T-cell (primary cell): ENCODE measurements at regions of chr11 and their contacts with region 1.

Region 1: DNA sequence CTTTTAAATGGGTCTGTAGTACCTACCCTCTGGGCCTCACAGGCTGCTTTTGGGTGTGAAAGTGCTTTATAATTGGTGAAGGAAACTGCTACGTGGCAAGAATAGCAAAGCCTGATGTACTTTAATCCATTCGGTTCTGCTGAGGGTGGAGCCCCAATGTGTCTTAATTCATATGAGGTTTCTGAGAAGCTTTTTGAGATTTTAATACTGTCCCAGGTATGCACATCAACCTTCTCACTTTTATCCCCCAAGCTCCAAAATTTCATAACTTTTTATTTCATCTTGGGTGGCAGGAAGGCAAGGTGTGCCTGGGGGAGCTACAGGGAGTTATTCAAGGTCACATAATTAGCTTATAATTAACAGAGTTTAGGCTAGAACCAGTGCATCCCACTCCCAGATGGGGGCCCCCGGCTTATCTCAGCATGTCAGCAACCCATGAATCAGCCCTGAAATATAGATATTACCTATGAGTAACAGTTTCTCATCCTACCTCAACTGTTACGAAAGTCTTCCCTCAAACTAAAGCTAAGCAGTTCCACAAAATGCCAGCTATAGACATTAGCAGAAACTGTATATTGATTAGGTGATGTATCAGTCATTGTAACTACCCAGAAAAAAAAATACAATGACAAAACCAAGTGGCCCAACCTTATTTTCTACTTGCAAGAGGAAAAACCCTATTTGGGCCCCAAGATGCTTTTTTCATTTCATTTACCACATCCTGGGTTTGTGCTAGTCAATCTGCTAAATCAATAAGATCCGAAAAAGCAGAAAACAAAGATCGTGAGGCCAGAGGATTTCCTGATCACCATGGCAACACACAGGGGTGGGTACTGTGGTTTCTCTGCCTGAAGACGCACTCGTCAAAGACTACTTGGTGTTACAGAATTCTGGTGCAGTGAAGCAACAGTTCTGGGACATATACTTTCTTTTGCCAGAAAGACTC is 26.7 kb downstream of the CD44 start:
- DNase-seq: peak; percentile 50 to 97 (median 90)
- ATAC-seq: peak; percentile 79 to 85 (median 84)
- H3K4me3 ChIP-seq: peak overlapping the region; percentile 35 to 46
- H3K4me3 Mint-ChIP-seq: peak overlapping the region; percentile 69 to 79 (median 78)
- H3K27ac ChIP-seq: peak overlapping the region; percentile 99
- H3K27ac Mint-ChIP-seq: peak overlapping the region; percentile 100
- H3K4me1 ChIP-seq: peaks cover 90 to 92% of the 10 kb centered on the region in 2 experiments
- H3K4me1 Mint-ChIP-seq: peaks cover 100% of the 10 kb centered on the region in 3 donors
- H3K27me3 ChIP-seq: no peaks in the 10 kb centered on the region
- H3K27me3 Mint-ChIP-seq: no peaks in the 10 kb centered on the region

Region 2: DNA sequence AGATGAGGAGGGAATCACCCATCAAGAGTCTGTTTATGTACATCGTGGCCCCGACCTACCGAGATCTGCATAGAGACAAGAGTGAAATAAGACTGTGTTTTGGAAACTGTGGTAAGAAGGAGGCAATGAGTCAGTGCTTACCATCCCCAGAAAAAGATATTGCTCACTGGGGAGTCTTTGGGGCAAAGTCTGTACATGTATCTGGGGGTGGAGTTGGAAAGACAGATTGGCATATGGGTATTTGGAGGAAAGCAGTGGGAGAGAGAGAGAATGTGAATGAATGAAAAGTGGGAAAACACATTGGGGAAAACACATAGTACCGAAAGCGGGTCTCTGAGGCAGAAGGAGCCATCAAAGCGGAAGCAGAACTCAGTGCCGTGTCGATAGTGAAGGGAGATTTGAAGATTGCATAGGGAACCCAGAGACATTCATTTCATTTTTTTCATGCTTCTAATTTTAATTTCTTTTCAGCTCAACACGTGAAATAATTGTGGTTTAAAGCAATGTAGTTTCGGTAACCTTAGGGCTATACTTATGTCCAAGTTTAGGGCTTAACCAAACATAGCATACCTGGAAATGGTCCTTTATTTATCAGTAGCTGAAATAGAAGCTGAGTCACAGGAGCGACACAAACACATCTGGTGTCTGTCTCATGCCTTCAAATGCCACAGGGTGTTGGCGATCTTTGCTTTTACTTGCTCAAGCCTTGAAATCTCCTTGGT is 125.3 kb before region 1 on chr11:
- CTCF ChIA-PET with region 1: interaction called in 1 of 2 experiments, 6 read pairs
- POLR2A ChIA-PET with region 1: interaction called, 5 to 72 read pairs
- DNase-seq: peak in 33 of 35 experiments; percentile 36 to 85 (median 50)
- ATAC-seq: peak; percentile 86 to 89 (median 88)
- H3K4me3 ChIP-seq: peak overlapping the region; percentile 51 to 53
- H3K4me3 Mint-ChIP-seq: peak overlapping the region; percentile 78 to 86 (median 80)
- H3K27ac ChIP-seq: peak overlapping the region; percentile 97
- H3K27ac Mint-ChIP-seq: peak overlapping the region; percentile 95 to 99
- H3K4me1 ChIP-seq: peaks cover 27 to 58% of the 10 kb centered on the region in 2 experiments
- H3K4me1 Mint-ChIP-seq: peaks cover 54 to 82% (median 69%) of the 10 kb centered on the region in 3 donors
- H3K27me3 ChIP-seq: no peaks in the 10 kb centered on the region
- H3K27me3 Mint-ChIP-seq: no peaks in the 10 kb centered on the region

Region 3: DNA sequence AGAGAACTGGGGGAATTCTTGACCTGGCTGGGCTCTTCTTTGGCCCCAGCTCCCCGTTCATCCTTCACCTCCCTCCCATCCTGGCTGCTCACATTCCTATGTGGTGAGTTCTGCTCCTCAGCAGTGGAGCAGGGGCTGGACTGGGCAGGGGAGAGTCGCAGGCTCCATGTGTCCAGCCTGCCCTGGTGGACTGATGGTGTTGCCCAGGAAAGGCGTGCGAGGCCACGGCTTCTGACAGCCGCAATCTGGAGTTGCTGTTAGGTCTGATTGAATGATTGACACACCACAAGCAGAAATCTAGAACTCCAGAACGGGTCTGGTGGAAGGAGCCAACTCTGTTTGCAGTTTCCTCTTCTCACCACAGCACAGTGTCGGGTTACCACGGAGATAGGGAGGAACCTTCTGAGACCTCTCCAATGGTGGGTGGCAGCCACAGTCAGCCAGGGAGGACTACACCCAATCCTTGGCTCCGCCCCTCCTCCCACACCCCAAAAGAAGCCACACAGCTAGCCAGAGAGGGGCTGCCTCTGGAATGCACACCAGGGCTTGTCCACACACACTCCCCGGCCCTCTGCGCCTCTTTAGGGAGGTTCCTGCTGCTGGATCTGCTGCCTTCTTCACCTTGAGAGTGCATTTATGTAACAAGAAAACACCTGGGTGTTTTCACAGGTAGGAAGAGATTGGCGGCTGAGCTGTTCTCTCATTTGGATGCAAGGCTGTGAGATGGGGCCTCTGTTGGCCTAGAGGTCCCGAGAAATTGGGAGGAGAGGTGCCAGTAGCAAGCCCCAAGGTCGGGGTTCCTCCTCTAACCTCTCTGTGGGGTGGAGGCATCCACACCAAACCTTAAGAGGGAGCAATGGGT is 83.1 kb before region 1 on chr11:
- CTCF ChIA-PET with region 1: interaction called in 1 of 2 experiments, 4 read pairs
- POLR2A ChIA-PET with region 1: interaction called in 1 of 2 experiments, 12 read pairs
- DNase-seq: peak; percentile 63 to 93 (median 85)
- ATAC-seq: peak; percentile 83 to 86 (median 84)
- H3K4me3 ChIP-seq: peak overlapping the region; percentile 40 to 62
- H3K4me3 Mint-ChIP-seq: peak overlapping the region; percentile 65 to 81 (median 67)
- H3K27ac ChIP-seq: peak overlapping the region; percentile 95
- H3K27ac Mint-ChIP-seq: peak overlapping the region; percentile 97 to 98
- H3K4me1 ChIP-seq: peaks cover 58 to 77% of the 10 kb centered on the region in 2 experiments
- H3K4me1 Mint-ChIP-seq: peaks cover 92 to 98% (median 94%) of the 10 kb centered on the region in 3 donors
- H3K27me3 ChIP-seq: no peaks in the 10 kb centered on the region
- H3K27me3 Mint-ChIP-seq: no peaks in the 10 kb centered on the region

Region 4: DNA sequence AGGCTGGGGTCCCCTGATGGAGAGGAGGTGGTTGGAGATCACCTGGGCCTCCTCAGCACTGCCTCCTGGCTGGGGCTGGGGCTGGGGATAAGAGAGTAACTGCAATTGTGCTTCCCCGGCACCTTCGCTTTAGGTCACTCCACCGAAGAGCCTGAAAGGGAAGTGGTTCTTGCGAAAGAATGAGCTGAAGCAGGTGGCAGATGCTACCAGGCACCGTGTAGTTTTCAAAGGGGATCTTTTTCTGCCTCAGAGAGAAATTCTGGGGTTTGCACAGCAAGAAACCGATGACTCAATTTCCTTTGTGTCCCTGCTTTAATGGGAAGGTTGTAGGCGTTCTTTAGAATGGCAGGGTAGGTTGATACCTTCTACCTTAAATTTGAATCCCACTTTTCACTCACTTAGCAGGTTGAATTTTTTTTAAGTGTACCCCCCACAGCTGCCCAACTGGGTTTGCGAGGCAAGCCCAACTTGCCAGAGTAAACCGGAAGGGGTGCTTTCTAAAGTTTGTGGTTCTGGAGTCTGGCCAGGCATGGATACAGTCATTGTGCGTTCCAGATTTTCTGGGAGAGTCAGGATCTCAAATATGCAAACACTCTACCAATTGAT is 21.5 kb before region 1 on chr11:
- CTCF ChIA-PET with region 1: interaction called, 9 to 21 read pairs
- POLR2A ChIA-PET with region 1: interaction called, 7 to 165 read pairs
- DNase-seq: peak in 34 of 35 experiments; percentile 43 to 83 (median 65)
- ATAC-seq: peak; percentile 62 to 74 (median 64)
- H3K4me3 ChIP-seq: peak overlapping the region; percentile 61 to 85
- H3K4me3 Mint-ChIP-seq: peak overlapping the region; percentile 91 to 98 (median 98)
- H3K27ac ChIP-seq: peak overlapping the region; percentile 91
- H3K27ac Mint-ChIP-seq: peak overlapping the region; percentile 92 to 98
- H3K4me1 ChIP-seq: peaks cover 60 to 79% of the 10 kb centered on the region in 2 experiments
- H3K4me1 Mint-ChIP-seq: peaks cover 75 to 92% (median 79%) of the 10 kb centered on the region in 3 donors
- H3K27me3 ChIP-seq: no peaks in the 10 kb centered on the region
- H3K27me3 Mint-ChIP-seq: no peaks in the 10 kb centered on the region

Region 5: DNA sequence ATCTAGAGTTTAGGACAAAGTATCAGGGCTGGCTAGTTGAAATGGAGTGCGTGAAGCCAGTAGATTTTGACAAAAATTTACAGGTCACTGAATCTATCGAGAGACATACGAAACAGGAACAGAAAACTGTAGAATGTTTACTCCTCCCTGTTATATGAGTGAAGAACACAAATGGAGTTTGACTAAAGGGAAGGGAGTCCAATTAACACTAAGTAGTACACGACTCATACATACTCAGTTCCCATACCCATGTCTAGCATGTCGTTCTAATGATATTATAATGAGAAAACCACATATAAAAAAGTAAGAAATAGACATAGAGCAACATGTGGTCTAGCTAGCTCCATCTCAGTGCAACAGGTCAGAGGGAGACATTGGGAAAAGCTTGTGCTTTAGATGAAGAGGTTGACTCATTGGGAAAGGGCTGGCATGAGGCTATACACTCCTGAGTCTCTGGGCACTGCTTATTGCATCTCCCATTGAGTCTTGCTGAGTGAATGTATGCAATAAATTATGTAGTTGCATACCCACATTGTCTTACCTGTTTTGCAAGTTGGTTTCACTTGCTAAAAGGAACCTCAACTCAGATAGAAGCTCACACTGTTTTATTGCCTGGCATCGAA is 16.7 kb after region 1 on chr11:
- CTCF ChIA-PET with region 1: interaction called, 6 to 34 read pairs
- POLR2A ChIA-PET with region 1: interaction called, 9 to 81 read pairs
- DNase-seq: no peak
- ATAC-seq: peak in 1 of 4 experiments; percentile 5
- H3K4me3 ChIP-seq: no peak overlapping the region
- H3K4me3 Mint-ChIP-seq: peak overlapping the region; percentile 18 to 23 (median 21)
- H3K27ac ChIP-seq: peak overlapping the region; percentile 50
- H3K27ac Mint-ChIP-seq: peak overlapping the region; percentile 92 to 94
- H3K4me1 ChIP-seq: peaks cover 49 to 69% of the 10 kb centered on the region in 2 experiments
- H3K4me1 Mint-ChIP-seq: peaks cover 82 to 88% (median 86%) of the 10 kb centered on the region in 3 donors
- H3K27me3 ChIP-seq: no peaks in the 10 kb centered on the region
- H3K27me3 Mint-ChIP-seq: no peaks in the 10 kb centered on the region

Region 6: GRCh38 chr11:35227576-35228327 is 62.1 kb after region 1 on chr11:
- CTCF ChIA-PET with region 1: no interaction called
- POLR2A ChIA-PET with region 1: no interaction called
- DNase-seq: no peak
- ATAC-seq: no peak
- H3K4me3 ChIP-seq: no peak overlapping the region
- H3K4me3 Mint-ChIP-seq: no peak overlapping the region
- H3K27ac ChIP-seq: no peak overlapping the region
- H3K27ac Mint-ChIP-seq: peak overlapping the region; percentile 63 to 80
- H3K4me1 ChIP-seq: no peaks in the 10 kb centered on the region
- H3K4me1 Mint-ChIP-seq: peaks cover 8 to 32% (median 23%) of the 10 kb centered on the region in 3 donors
- H3K27me3 ChIP-seq: no peaks in the 10 kb centered on the region
- H3K27me3 Mint-ChIP-seq: no peaks in the 10 kb centered on the region

Region 7: DNA sequence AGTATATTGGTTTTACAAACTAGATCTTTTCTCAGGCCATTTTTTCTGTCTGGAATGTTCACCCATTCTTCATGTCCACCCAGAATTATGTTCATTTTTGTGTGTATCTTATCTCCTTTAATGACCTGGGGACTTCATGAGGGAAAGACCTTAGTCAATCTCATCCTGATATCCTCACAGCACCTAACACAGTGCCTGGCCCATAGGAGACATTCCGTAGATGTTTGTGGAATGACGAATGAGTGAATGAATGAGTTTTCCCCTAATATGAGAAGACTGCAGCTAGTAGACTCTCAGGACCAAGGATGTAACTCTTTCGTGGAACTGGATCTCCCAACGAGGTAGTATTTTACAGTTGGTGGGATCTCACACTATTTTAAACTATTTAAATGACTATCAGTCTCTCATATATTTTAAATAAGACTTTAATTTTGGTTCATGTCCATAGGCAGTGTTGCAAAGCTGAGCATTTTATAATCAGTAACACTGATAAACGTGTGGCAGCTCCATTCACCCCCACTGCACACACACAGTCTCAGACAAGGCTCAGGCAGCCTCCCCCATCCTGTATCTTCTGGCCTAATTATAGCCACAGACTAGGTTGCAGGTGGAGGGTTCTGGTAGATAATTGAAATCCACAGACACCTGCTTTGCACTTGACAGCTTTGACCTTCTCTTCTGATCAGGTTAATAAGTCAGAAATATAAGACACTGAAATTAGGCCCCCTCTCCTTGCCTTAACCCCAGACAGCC is 659.5 kb after region 1 on chr11:
- CTCF ChIA-PET with region 1: no interaction called
- POLR2A ChIA-PET with region 1: no interaction called
- DNase-seq: no peak
- ATAC-seq: no peak
- H3K4me3 ChIP-seq: no peak overlapping the region
- H3K4me3 Mint-ChIP-seq: no peak overlapping the region
- H3K27ac ChIP-seq: no peak overlapping the region
- H3K27ac Mint-ChIP-seq: no peak overlapping the region
- H3K4me1 ChIP-seq: peaks cover 0 to 8% of the 10 kb centered on the region in 2 experiments
- H3K4me1 Mint-ChIP-seq: peaks cover 7 to 20% (median 19%) of the 10 kb centered on the region in 3 donors
- H3K27me3 ChIP-seq: peaks cover 2 to 5% of the 10 kb centered on the region in 2 experiments
- H3K27me3 Mint-ChIP-seq: no peaks in the 10 kb centered on the region